Endothelial cell of umbilical vein (primary cell): ENCODE measurements at regions of chr21 and their contacts with region 1.

Region 1: DNA sequence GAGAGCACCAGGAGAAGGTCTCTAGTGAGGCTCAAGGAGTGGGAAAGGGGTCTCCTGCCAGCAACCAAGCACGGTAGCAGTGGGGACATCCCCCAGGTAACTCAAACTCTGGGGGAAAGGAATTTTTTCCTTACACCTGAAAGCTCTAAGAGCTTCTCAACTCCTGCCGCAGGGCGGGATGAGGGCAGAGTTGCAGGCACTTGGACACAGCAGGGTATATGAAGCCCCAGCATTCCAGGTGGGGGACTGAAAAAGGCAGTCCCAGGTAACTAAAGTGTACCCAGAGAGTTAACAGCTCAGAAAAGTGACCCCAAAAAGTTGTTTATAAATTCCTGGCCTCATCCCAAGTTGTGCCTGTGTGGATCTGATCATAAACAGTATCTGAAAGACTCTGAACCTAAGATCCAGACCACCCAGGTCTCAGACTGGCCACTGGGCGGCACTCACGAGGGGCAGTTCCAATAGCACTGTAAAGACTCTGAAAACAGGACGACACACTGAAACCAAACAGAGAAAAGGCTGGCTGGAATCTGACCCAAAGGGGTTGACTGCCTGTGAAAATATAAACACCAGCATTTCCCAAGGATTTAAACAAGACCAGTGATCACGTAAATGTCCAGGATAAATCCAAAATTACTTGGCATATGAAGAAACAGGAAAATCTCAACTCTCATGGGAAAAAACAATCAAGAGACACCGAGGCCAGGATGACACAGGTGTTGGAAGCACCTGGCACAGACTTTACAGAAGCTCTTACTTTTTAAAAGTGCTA is 47.5 kb downstream of the HSF2BP start:
- DNase-seq: peak; percentile 80
- H3K4me3 ChIP-seq: no peak overlapping the region
- H3K27ac ChIP-seq: peak overlapping the region; percentile 53
- H3K4me1 ChIP-seq: peaks cover 8% of the 10 kb centered on the region
- H3K27me3 ChIP-seq: no peaks in the 10 kb centered on the region
- CTCF ChIP-seq: peak; percentile 77 to 90
- POLR2A ChIP-seq: no peak

Region 2: GRCh38 chr21:43597052-43597451 is 14.7 kb before region 1 on chr21:
- CTCF ChIA-PET with region 1: interaction called, 18 read pairs
- POLR2A ChIA-PET with region 1: no interaction called
- dilution Hi-C with region 1: no loop called
- intact Hi-C with region 1: loop called (anchors 2 kb)
- DNase-seq: no peak
- H3K4me3 ChIP-seq: no peak overlapping the region
- H3K27ac ChIP-seq: no peak overlapping the region
- H3K4me1 ChIP-seq: peaks cover 1% of the 10 kb centered on the region
- H3K27me3 ChIP-seq: no peaks in the 10 kb centered on the region
- CTCF ChIP-seq: no peak
- POLR2A ChIP-seq: no peak